Tibial artery (tissue), 4 donors: ENCODE measurements at regions of chr18 and their contacts with region 1.

Region 1: GRCh38 chr18:51029694-51030536 is at the start of gene SMAD4:
- DNase-seq: peak; percentile 95 to 98
- H3K4me3 ChIP-seq: peak within 1 kb of the TSS; percentile 57 to 85
- H3K27ac ChIP-seq: peak within 1 kb of the TSS; percentile 91 to 92
- H3K4me1 ChIP-seq: peaks cover 0 to 62% (median 21%) of the 10 kb centered on the region in 4 donors
- H3K27me3 ChIP-seq: no peaks in the 10 kb centered on the region
- CTCF ChIP-seq: no peak

Region 2: DNA sequence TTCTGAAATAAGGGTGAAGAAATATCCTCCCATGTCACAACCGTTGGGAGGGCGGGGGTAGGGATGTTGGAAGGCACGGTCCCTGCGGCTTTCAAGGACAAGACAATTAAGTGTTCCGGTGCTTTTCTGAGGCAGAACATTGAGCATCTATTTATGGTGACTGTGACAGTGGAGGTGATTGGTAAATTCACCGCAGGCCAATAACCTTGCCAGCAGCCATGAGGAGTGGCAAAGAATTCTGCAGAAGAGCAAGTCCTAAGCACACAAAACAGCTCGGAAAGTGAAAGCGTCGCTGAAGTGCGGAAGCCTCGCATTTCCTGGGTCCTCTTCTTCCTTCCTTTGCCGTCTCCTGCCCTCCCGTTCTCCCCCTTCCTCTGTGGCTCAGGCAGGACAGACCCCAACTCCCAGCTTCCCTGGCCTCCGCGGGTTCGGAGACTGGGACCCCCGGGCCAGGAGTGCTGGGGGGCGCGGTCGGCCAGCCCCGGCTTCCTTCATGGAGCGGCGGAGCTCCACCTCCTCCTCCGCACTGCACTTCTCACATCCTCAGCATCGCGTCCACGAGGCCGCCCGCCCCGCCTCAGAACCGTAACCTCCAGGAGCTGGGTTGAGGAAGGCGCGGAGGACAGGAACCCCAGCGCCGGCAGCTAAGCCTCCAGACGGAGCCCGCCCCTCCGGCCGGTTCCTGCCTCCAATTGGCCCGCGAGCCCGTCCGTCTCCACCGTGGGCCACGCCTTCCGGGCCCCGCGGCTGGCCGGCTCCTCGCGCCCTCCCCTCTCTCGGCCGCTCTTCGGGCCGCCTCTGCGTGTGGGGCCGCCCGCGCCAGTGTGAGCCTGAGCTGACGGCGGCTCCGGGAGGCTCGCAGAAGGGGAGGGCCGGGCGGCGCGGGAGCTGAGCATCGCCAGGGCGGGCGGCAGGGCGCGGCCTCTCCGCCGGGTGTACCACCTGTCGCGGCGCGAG is 151.3 kb before region 1 on chr18 and contains the start of gene ME2:
- intact Hi-C with region 1: loop called (anchors 5 kb)
- DNase-seq: peak; percentile 90 to 95
- H3K4me3 ChIP-seq: peak within 1 kb of the TSS; percentile 80 to 97
- H3K27ac ChIP-seq: peak within 1 kb of the TSS; percentile 87 to 91
- H3K4me1 ChIP-seq: peaks cover 0 to 10% (median 8%) of the 10 kb centered on the region in 4 donors
- H3K27me3 ChIP-seq: no peaks in the 10 kb centered on the region
- CTCF ChIP-seq: no peak

Region 3: GRCh38 chr18:50973367-50974126 is 56.4 kb before region 1 on chr18:
- intact Hi-C with region 1: loop called (anchors 5 kb)
- DNase-seq: no peak
- H3K4me3 ChIP-seq: no peak overlapping the region
- H3K27ac ChIP-seq: no peak overlapping the region
- H3K4me1 ChIP-seq: peaks cover 0 to 17% (median 11%) of the 10 kb centered on the region in 4 donors
- H3K27me3 ChIP-seq: no peaks in the 10 kb centered on the region
- CTCF ChIP-seq: no peak

Region 4: DNA sequence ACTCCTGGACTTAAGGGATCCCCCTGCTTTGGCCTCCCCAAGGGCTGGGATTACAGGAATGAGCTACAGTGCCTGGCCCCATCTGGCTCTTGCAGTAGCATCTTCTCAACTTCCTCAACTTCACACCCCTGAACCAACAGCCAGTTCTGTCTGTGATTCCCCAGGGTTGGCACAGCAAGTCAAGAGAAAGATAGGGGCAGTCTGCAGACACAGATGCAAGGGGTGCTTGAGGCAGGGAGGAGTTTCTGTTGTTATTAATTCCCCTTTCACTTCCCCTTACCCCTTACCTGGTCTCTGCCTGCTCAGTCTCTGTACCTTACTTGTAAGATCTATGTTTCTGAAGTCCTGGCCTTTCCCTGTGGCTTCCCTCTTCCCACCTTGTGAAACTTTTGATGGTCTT is 221.7 kb after region 1 on chr18:
- intact Hi-C with region 1: no loop called
- DNase-seq: no peak
- H3K4me3 ChIP-seq: no peak overlapping the region
- H3K27ac ChIP-seq: no peak overlapping the region
- H3K4me1 ChIP-seq: no peaks in the 10 kb centered on the region
- H3K27me3 ChIP-seq: no peaks in the 10 kb centered on the region
- CTCF ChIP-seq: no peak